Activated CD8-positive, alpha-beta T cell treated with anti-CD3 and anti-CD28 coated beads, Interleukin-2, amount 10 ng/mL, durations not matched to agents 7 days and 5 days (primary cell): ENCODE measurements at regions of chr6 and their contacts with region 1.

Region 1: DNA sequence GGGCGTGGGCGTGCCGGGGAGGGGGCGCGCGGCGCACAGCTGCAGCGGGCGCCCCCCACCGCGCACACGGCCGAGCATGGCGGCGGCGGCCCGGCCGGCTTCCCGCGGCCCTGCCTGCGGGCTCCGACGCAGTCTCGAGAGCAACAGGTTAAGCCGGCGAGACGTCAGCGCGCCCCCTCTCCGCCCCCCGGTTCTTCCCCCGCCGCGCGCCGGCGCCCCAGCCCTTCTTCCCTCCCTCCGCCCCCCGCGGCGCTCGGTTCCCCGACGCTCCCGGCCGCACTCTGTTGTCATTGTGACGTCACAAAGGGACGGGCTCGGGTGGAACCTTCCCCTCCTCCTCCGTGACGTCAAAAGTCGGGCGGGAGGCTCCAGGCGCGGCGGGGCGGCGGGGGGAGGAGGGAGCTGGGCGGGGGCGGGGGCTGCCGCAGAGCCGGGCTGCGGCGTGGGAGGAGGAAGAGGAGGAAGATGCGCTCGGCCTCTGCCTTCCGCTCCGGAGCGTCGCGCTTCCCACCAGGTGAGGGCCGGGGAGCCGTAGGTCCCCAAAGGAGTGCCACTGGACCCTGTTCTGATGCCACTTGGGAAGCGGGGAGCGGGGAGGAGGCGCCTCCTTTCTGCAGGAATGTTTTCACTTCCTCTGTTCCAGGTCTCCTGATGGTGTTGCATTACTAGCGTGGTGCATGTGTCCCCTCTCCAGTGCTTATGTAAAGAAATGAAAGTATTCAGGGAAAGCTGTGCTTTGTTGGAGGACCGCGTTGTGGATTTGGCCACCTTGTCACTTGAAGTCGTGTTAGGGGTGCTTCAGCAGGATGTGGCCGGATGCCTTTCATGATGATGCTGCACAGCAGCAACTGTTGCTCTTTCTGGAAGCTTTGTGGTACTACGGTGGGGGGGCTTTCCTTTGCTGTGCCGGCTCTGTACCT is 2.8 kb downstream of the JARID2 start:
- DNase-seq: peak; percentile 98
- ATAC-seq: peak; percentile 42
- H3K4me3 Mint-ChIP-seq: peak overlapping the region; percentile 94
- H3K27ac Mint-ChIP-seq: peak overlapping the region; percentile 100
- H3K4me1 Mint-ChIP-seq: peaks cover 54% of the 10 kb centered on the region
- H3K27me3 Mint-ChIP-seq: no peaks in the 10 kb centered on the region

Region 2: DNA sequence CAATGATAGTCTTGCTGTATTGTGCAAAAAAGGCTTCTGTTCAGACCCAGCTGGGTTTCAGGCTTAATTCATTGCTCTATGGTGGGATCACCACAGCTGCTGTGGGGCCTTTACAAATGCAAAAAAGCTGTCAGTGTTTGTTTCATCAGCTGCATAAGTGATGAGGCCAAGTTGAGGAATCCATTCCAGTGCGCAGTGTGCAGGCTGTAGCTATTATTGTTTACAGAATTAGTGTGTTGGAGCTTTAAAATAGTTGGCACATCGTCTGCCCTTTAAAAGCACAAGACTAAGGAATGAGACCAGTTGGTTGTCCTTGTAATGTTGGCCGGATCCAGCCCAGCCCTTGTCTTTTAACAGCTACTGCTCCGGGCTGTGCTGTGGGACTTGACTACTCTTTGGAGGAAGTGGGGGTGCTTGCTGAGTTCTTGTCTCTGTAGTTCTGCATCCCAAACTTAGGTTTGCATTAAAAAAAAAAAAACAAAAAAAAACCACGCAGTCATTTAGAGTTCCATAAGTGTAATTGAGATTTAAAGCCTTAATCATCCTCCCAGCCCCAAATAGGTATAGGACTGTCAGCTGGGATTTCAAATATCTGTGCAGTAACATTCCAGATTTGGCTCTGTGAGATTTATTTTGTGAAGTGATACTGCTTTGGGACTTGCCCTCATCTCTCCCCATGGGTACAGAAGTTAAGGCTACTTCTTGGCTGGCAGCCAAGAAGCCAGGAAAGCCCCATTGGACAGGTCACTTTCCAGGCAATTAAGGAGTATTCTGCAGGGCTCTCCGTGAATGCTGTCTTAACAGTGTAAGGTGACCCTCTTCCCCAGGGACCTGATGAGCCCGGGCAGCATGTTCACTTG is 16.4 kb after region 1 on chr6:
- CTCF ChIA-PET with region 1: interaction called, 12 read pairs
- POLR2A ChIA-PET with region 1: interaction called, 13 read pairs
- DNase-seq: no peak
- ATAC-seq: peak; percentile 40
- H3K4me3 Mint-ChIP-seq: peak overlapping the region; percentile 42
- H3K27ac Mint-ChIP-seq: peak overlapping the region; percentile 61
- H3K4me1 Mint-ChIP-seq: peaks cover 84% of the 10 kb centered on the region
- H3K27me3 Mint-ChIP-seq: no peaks in the 10 kb centered on the region

Region 3: GRCh38 chr6:15299430-15300131 is 50.9 kb after region 1 on chr6:
- CTCF ChIA-PET with region 1: interaction called, 5 read pairs
- POLR2A ChIA-PET with region 1: interaction called, 10 read pairs
- DNase-seq: peak; percentile 82
- ATAC-seq: peak; percentile 66
- H3K4me3 Mint-ChIP-seq: peak overlapping the region; percentile 49
- H3K27ac Mint-ChIP-seq: peak overlapping the region; percentile 88
- H3K4me1 Mint-ChIP-seq: peaks cover 82% of the 10 kb centered on the region
- H3K27me3 Mint-ChIP-seq: no peaks in the 10 kb centered on the region

Region 4: GRCh38 chr6:15470746-15471145 is 222.0 kb after region 1 on chr6:
- CTCF ChIA-PET with region 1: no interaction called
- POLR2A ChIA-PET with region 1: no interaction called
- DNase-seq: no peak
- ATAC-seq: no peak
- H3K4me3 Mint-ChIP-seq: no peak overlapping the region
- H3K27ac Mint-ChIP-seq: no peak overlapping the region
- H3K4me1 Mint-ChIP-seq: no peaks in the 10 kb centered on the region
- H3K27me3 Mint-ChIP-seq: no peaks in the 10 kb centered on the region